Left ventricle myocardium inferior (tissue), 1 donor: ENCODE measurements at regions of chr13 and their contacts with region 1.

Region 1: GRCh38 chr13:76667551-76667950 is 218.7 kb downstream of the KCTD12 start:
- DNase-seq: no peak
- H3K4me3 ChIP-seq: no peak overlapping the region
- H3K27ac ChIP-seq: no peak overlapping the region
- H3K4me1 ChIP-seq: peaks cover 20% of the 10 kb centered on the region
- H3K27me3 ChIP-seq: no peaks in the 10 kb centered on the region
- CTCF ChIP-seq: peak; percentile 62

Region 2: GRCh38 chr13:76271728-76272232 is 395.8 kb before region 1 on chr13:
- intact Hi-C with region 1: no loop called
- DNase-seq: no peak
- H3K4me3 ChIP-seq: no peak overlapping the region
- H3K27ac ChIP-seq: no peak overlapping the region
- H3K4me1 ChIP-seq: no peaks in the 10 kb centered on the region
- H3K27me3 ChIP-seq: no peaks in the 10 kb centered on the region
- CTCF ChIP-seq: no peak

Region 3: GRCh38 chr13:76792731-76793347 is 125.3 kb after region 1 on chr13:
- intact Hi-C with region 1: no loop called
- DNase-seq: no peak
- H3K4me3 ChIP-seq: no peak overlapping the region
- H3K27ac ChIP-seq: peak overlapping the region; percentile 70
- H3K4me1 ChIP-seq: peaks cover 34% of the 10 kb centered on the region
- H3K27me3 ChIP-seq: no peaks in the 10 kb centered on the region
- CTCF ChIP-seq: no peak

Region 4: GRCh38 chr13:76886292-76887075 is 218.9 kb after region 1 on chr13 and contains the start of gene KCTD12:
- intact Hi-C with region 1: loop called (anchors 5 kb)
- DNase-seq: peak; percentile 93
- H3K4me3 ChIP-seq: peak within 1 kb of the TSS; percentile 94
- H3K27ac ChIP-seq: peak within 1 kb of the TSS; percentile 89
- H3K4me1 ChIP-seq: peaks cover 53% of the 10 kb centered on the region
- H3K27me3 ChIP-seq: no peaks in the 10 kb centered on the region
- CTCF ChIP-seq: peak; percentile 56
- total RNA-seq, gene KCTD12: 37.2 TPM

Region 5: DNA sequence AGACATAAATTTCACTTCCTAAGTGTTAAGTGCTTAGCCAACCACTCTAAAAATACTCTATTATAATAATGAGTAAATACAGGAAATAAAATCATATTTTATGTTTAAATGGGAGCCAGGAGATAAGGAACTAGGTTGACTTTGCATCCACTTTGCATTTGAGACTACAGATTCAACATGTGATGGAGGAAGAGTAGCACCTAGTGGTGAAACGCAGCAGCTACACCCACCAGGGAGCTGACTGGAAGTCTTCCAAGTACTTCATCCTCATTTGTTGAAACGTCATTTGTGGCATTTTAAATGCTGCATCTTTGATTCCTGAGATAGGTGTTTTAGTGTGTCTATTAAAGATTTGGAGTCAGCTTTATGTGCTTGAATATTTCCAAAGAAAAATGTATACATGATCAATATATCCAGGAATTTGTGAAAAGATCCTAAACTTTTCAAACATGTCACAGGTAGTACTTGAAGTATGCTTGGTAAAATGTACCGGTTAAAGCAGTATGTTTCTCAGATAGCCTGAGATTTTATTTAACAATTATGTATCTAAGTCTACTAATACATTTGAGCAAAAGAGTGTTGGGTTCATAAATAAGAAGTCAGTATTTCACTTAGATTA is 236.1 kb after region 1 on chr13:
- intact Hi-C with region 1: loop called (anchors 5 kb)
- DNase-seq: peak; percentile 33
- H3K4me3 ChIP-seq: no peak overlapping the region
- H3K27ac ChIP-seq: no peak overlapping the region
- H3K4me1 ChIP-seq: no peaks in the 10 kb centered on the region
- H3K27me3 ChIP-seq: no peaks in the 10 kb centered on the region
- CTCF ChIP-seq: peak; percentile 100